ENCODE measurements at regions of chr2 and their contacts with region 1.

Region 1: DNA sequence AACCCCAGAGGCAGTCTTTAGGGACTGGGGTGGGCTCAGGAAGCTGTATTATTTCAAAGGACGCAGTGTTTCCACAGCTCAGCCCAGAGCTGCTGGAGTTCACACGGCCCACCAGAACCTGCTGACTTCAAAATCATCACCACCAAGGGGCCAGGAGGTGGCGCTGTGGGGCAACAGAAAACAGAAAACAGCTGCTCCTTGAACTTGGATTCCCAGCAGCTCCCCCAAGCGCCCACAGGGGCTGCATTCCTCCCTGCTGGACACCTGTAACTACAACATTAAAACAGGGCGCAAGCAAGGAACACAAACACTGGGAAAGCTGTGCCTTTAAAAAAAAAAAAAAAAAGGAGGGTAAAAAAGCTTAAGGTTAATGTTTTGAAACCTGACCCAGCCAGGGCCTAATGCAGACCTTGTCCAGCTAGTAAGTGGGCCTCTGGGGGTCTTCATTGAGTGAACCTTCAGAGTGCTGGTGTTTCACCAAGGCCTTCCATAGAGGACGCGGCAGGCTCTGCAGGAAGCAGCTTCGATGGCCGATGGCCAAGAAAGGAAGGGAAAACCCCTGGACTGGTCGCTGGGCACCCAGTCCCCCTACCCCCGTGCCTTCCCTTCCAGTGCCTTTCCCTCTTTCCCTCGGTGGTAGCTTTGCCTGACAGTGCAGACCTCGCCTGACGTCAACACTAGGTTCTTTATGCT is 25.9 kb downstream of the MLPH start:
- DNase-seq: peak; percentile 48 to 85 (median 77)
- ATAC-seq: peak; percentile 86
- H3K4me3 ChIP-seq: no peak overlapping the region
- H3K4me3 Mint-ChIP-seq: no peak overlapping the region
- H3K27ac ChIP-seq: no peak overlapping the region
- H3K27ac Mint-ChIP-seq: no peak overlapping the region
- H3K4me1 ChIP-seq: no peaks in the 10 kb centered on the region
- H3K4me1 Mint-ChIP-seq: no peaks in the 10 kb centered on the region
- H3K27me3 ChIP-seq: no peaks in the 10 kb centered on the region
- H3K27me3 Mint-ChIP-seq: peaks cover 3% of the 10 kb centered on the region
- CTCF ChIP-seq: peak; percentile 83

Region 2: GRCh38 chr2:236637686-236638569 is 875.0 kb before region 1 on chr2:
- CTCF ChIA-PET with region 1: no interaction called
- POLR2A ChIA-PET with region 1: no interaction called
- intact Hi-C with region 1: no loop called
- DNase-seq: peak in 1 of 9 experiments; percentile 29
- ATAC-seq: no peak
- H3K4me3 ChIP-seq: no peak overlapping the region
- H3K4me3 Mint-ChIP-seq: no peak overlapping the region
- H3K27ac ChIP-seq: no peak overlapping the region
- H3K27ac Mint-ChIP-seq: no peak overlapping the region
- H3K4me1 ChIP-seq: no peaks in the 10 kb centered on the region
- H3K4me1 Mint-ChIP-seq: no peaks in the 10 kb centered on the region
- H3K27me3 ChIP-seq: no peaks in the 10 kb centered on the region
- H3K27me3 Mint-ChIP-seq: peaks cover 19% of the 10 kb centered on the region
- CTCF ChIP-seq: no peak

Region 3: DNA sequence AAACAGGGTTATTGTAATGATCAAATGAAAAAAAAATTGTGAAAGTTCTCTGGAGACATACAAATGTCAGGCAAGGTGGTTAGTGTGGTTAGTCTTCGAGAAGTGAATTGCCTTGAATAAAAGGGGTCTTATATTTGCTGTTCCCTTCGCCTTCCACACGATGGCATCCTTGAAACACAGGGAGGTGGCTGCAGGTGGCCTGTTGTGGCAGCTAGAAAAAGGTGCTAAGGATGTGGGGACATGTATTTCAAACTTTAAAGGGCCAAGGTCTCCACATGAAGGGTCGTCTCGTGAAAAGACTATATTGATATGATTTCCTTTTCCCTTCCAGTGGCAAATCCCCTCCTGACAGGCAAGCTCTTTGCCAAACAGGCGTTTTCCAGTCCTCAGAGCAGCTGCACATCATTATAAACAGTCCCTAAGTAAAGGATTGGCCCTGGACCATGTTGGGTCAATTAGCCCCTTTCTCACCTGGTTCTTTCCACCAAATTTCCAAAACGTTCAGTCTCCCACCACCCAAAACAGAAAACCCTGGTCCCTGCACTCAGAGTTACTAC is 358.8 kb before region 1 on chr2:
- CTCF ChIA-PET with region 1: interaction called, 13 read pairs
- POLR2A ChIA-PET with region 1: no interaction called
- intact Hi-C with region 1: loop called in 1 of 2 experiments (anchors 1 kb)
- DNase-seq: peak in 8 of 9 experiments; percentile 34 to 75 (median 54)
- ATAC-seq: peak; percentile 81
- H3K4me3 ChIP-seq: no peak overlapping the region
- H3K4me3 Mint-ChIP-seq: no peak overlapping the region
- H3K27ac ChIP-seq: no peak overlapping the region
- H3K27ac Mint-ChIP-seq: no peak overlapping the region
- H3K4me1 ChIP-seq: peaks cover 14% of the 10 kb centered on the region
- H3K4me1 Mint-ChIP-seq: peaks cover 20% of the 10 kb centered on the region
- H3K27me3 ChIP-seq: no peaks in the 10 kb centered on the region
- H3K27me3 Mint-ChIP-seq: no peaks in the 10 kb centered on the region
- CTCF ChIP-seq: peak; percentile 59

Region 4: GRCh38 chr2:237524631-237525030 is 11.7 kb after region 1 on chr2:
- CTCF ChIA-PET with region 1: interaction called, 17 read pairs
- POLR2A ChIA-PET with region 1: no interaction called
- intact Hi-C with region 1: no loop called
- DNase-seq: no peak
- ATAC-seq: no peak
- H3K4me3 ChIP-seq: no peak overlapping the region
- H3K4me3 Mint-ChIP-seq: no peak overlapping the region
- H3K27ac ChIP-seq: no peak overlapping the region
- H3K27ac Mint-ChIP-seq: no peak overlapping the region
- H3K4me1 ChIP-seq: no peaks in the 10 kb centered on the region
- H3K4me1 Mint-ChIP-seq: no peaks in the 10 kb centered on the region
- H3K27me3 ChIP-seq: no peaks in the 10 kb centered on the region
- H3K27me3 Mint-ChIP-seq: no peaks in the 10 kb centered on the region
- CTCF ChIP-seq: no peak

Region 5: DNA sequence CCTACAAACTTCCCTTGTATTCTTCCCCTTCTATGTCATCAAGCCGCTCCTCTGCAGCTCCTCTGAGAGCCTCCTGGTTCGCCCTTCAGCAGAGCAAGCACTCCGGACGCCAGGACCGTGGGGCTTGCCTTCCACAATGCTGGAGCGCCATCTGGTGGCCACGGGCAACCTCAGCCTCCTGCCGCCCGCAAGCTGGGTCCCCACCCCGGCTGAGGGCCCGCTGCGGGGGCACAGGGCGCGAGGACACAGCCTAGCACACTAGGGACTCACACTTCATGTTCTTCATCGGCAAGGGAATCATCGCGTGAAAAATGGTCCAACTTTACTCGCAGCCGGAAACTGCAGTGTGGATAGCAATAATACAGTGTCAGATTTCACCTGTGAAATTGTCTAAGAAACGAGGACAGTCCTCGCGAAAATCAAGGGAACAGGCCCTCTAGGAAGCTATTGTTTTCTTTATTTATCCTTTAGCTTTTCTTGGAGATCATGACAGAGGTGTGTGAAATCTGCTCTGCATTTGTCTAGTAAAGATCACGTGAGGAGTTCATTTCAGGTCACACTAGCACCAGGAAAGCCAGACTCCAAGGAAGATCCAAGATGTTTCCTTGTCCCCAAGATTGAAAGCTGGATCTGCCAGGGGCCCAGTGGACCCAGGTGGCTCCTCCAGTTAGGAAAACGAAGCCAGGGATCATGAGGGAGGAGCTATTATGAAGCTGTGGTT is 59.3 kb after region 1 on chr2:
- CTCF ChIA-PET with region 1: interaction called, 135 read pairs
- POLR2A ChIA-PET with region 1: interaction called, 8 read pairs
- intact Hi-C with region 1: loop called (anchors 1 kb)
- DNase-seq: peak; percentile 67 to 92 (median 85)
- ATAC-seq: peak; percentile 94
- H3K4me3 ChIP-seq: no peak overlapping the region
- H3K4me3 Mint-ChIP-seq: no peak overlapping the region
- H3K27ac ChIP-seq: no peak overlapping the region
- H3K27ac Mint-ChIP-seq: no peak overlapping the region
- H3K4me1 ChIP-seq: no peaks in the 10 kb centered on the region
- H3K4me1 Mint-ChIP-seq: peaks cover 3% of the 10 kb centered on the region
- H3K27me3 ChIP-seq: no peaks in the 10 kb centered on the region
- H3K27me3 Mint-ChIP-seq: peaks cover 11% of the 10 kb centered on the region
- CTCF ChIP-seq: peak; percentile 91

Region 6: GRCh38 chr2:238263204-238264071 is 750.5 kb after region 1 on chr2:
- CTCF ChIA-PET with region 1: interaction called, 6 read pairs
- POLR2A ChIA-PET with region 1: no interaction called
- intact Hi-C with region 1: loop called in 1 of 2 experiments (anchors 5 kb)
- DNase-seq: peak; percentile 57 to 82 (median 77)
- ATAC-seq: peak; percentile 67
- H3K4me3 ChIP-seq: no peak overlapping the region
- H3K4me3 Mint-ChIP-seq: no peak overlapping the region
- H3K27ac ChIP-seq: no peak overlapping the region
- H3K27ac Mint-ChIP-seq: no peak overlapping the region
- H3K4me1 ChIP-seq: no peaks in the 10 kb centered on the region
- H3K4me1 Mint-ChIP-seq: peaks cover 5% of the 10 kb centered on the region
- H3K27me3 ChIP-seq: no peaks in the 10 kb centered on the region
- H3K27me3 Mint-ChIP-seq: no peaks in the 10 kb centered on the region
- CTCF ChIP-seq: peak; percentile 78